Head of caudate nucleus (tissue), 42 donors: ENCODE measurements at regions of chr2 and their contacts with region 1.

Region 1: DNA sequence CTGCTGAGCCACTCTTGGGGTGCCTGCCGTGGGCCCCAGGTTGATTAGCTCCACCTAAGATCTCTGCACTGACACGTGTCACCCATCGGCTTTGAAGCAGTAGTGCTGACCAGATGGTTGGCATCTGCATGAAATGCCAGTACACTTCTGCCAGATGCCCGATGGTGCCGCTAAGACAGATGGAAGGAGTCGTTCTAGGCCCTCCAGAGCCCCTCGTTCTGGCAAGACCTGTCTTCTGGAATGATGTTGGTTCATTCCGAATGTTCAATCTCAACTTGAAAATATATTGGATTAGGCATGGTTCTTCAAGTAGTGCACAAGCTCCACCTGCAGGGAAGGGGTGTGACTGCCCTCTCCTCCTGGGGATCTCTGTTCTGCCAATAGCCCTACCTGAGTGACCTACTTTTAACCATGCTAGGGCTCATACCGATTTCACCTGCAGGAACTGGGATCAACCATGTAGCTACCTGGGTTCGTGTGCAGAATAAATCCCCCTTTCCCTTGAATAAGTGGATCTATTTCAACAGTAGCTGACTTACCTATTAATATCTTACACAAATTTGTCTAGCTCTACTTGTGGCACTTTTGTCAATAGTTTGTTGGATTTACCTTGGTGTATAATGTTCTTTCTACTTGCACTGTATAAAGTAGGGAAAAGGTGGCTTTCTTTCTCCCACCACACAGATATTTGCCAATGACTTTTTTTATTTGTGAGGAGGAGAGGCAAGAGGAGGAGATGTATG is 342.6 kb downstream of the CTNNA2 start:
- DNase-seq: peak in 40 of 42 donors; percentile 19 to 78 (median 56)

Region 2: GRCh38 chr2:79250656-79251055 is 604.8 kb before region 1 on chr2:
- intact Hi-C with region 1: no loop called
- DNase-seq: no peak

Region 3: GRCh38 chr2:79670198-79670597 is 185.2 kb before region 1 on chr2:
- intact Hi-C with region 1: loop called (anchors 10 kb)
- DNase-seq: no peak

Region 4: DNA sequence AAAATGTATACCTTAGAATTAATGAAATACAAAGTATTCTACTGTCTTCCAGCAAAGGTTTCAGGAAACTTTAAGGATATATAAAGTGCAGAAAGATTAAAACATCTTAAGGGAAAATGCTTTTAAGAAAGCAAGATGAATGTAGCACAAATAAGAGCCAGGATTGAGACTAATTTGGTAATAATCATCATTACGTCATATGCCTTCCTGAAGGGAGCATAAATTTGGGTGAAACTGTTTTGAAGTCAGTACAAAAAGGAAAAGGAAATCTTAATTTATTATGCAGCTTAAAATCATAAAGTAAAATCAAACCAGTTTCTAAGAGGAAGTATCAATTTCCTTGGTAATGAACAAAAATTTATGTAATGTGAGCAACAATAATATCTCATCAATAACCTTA is 120.9 kb before region 1 on chr2:
- intact Hi-C with region 1: loop called (anchors 10 kb)
- DNase-seq: no peak